Mammary epithelial cell (primary cell): ENCODE measurements at regions of chr2 and their contacts with region 1.

Region 1: GRCh38 chr2:84297155-84297554 is 161.9 kb downstream of the SUCLG1 start:
- DNase-seq: peak; percentile 73
- H3K4me3 ChIP-seq: no peak overlapping the region
- H3K27ac ChIP-seq: peak overlapping the region; percentile 30
- H3K4me1 ChIP-seq: peaks cover 31% of the 10 kb centered on the region
- H3K27me3 ChIP-seq: no peaks in the 10 kb centered on the region
- CTCF ChIP-seq: no peak

Region 2: DNA sequence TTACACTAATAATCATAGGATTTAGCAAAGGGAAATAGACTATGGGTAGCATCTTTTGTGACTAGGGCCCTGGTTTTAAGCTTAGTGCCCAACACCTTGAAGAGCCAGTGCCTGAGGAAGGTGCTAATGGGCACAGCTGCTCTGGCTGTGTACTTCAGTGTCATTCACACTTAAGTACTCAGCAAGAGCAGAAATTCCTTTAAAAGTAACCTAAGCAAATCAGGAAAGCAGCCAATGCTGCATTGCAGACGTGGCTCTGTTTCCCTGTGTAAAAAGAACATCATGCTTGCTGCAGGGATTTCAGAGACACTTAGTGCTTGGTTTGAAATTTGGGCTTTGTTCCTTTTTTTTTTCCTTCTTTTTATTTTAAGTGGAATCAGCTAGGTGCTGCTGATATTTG is 343.5 kb before region 1 on chr2:
- CTCF ChIA-PET with region 1: no interaction called
- dilution Hi-C with region 1: no loop called
- in situ Hi-C with region 1: no loop called
- intact Hi-C with region 1: loop called (anchors 5 kb)
- DNase-seq: no peak
- H3K4me3 ChIP-seq: no peak overlapping the region
- H3K27ac ChIP-seq: peak overlapping the region; percentile 43
- H3K4me1 ChIP-seq: peaks cover 16% of the 10 kb centered on the region
- H3K27me3 ChIP-seq: no peaks in the 10 kb centered on the region
- CTCF ChIP-seq: no peak

Region 3: GRCh38 chr2:84038866-84039265 is 258.3 kb before region 1 on chr2:
- CTCF ChIA-PET with region 1: no interaction called
- dilution Hi-C with region 1: no loop called
- in situ Hi-C with region 1: loop called in 1 of 2 experiments (anchors 25 kb)
- intact Hi-C with region 1: no loop called
- DNase-seq: no peak
- H3K4me3 ChIP-seq: no peak overlapping the region
- H3K27ac ChIP-seq: no peak overlapping the region
- H3K4me1 ChIP-seq: no peaks in the 10 kb centered on the region
- H3K27me3 ChIP-seq: peaks cover 6% of the 10 kb centered on the region
- CTCF ChIP-seq: no peak

Region 4: GRCh38 chr2:84247542-84247951 is 49.6 kb before region 1 on chr2:
- CTCF ChIA-PET with region 1: no interaction called
- dilution Hi-C with region 1: no loop called
- in situ Hi-C with region 1: no loop called
- intact Hi-C with region 1: loop called (anchors 5 kb)
- DNase-seq: peak; percentile 84
- H3K4me3 ChIP-seq: no peak overlapping the region
- H3K27ac ChIP-seq: peak overlapping the region; percentile 37
- H3K4me1 ChIP-seq: peaks cover 12% of the 10 kb centered on the region
- H3K27me3 ChIP-seq: no peaks in the 10 kb centered on the region
- CTCF ChIP-seq: no peak

Region 5: GRCh38 chr2:84516234-84516986 is 219.3 kb after region 1 on chr2 and contains the start of gene DNAH6:
- CTCF ChIA-PET with region 1: no interaction called
- dilution Hi-C with region 1: no loop called
- in situ Hi-C with region 1: no loop called
- intact Hi-C with region 1: no loop called
- DNase-seq: peak; percentile 94
- H3K4me3 ChIP-seq: peak within 1 kb of the TSS; percentile 62 to 78 (median 67)
- H3K27ac ChIP-seq: peak within 1 kb of the TSS; percentile 84
- H3K4me1 ChIP-seq: peaks cover 8% of the 10 kb centered on the region
- H3K27me3 ChIP-seq: no peaks in the 10 kb centered on the region
- CTCF ChIP-seq: no peak
- total RNA-seq, gene DNAH6: 0.45 to 0.50 TPM